Ascending aorta (tissue), 2 donors: ENCODE measurements at regions of chr4 and their contacts with region 1.

Region 1: DNA sequence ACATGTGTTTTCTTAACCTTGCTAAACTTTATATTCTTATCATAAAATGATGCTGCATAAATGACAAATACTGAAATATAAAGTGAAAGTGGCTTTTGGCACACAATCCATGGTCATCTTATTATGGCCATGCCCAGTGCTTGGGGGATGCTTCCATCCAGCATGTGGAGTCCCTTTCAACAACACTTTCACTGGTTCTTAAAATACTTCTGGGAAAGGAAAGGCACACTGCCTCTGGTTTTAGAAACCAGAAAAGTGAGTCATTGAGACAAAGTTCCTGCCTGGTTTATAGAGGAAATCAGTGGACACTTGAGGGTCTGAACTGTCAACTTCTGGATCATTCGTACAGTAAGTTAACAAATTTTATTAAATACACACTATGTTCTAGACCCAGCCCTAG is 248.0 kb upstream of the ADAMTS3 start:
- DNase-seq: no peak
- H3K4me3 ChIP-seq: no peak overlapping the region
- H3K27ac ChIP-seq: peak overlapping the region; percentile 49 to 57
- H3K4me1 ChIP-seq: peaks cover 0 to 16% of the 10 kb centered on the region in 2 donors
- H3K27me3 ChIP-seq: no peaks in the 10 kb centered on the region
- CTCF ChIP-seq: no peak

Region 2: GRCh38 chr4:72767618-72768302 is 49.3 kb before region 1 on chr4:
- intact Hi-C with region 1: loop called (anchors 5 kb)
- DNase-seq: no peak
- H3K4me3 ChIP-seq: peak overlapping the region in 1 of 2 donors; percentile 52
- H3K27ac ChIP-seq: peak overlapping the region; percentile 62 to 84
- H3K4me1 ChIP-seq: no peaks in the 10 kb centered on the region
- H3K27me3 ChIP-seq: no peaks in the 10 kb centered on the region
- CTCF ChIP-seq: no peak